Caco-2 (cell line): ENCODE measurements at regions of chr7 and their contacts with region 1.

Region 1: DNA sequence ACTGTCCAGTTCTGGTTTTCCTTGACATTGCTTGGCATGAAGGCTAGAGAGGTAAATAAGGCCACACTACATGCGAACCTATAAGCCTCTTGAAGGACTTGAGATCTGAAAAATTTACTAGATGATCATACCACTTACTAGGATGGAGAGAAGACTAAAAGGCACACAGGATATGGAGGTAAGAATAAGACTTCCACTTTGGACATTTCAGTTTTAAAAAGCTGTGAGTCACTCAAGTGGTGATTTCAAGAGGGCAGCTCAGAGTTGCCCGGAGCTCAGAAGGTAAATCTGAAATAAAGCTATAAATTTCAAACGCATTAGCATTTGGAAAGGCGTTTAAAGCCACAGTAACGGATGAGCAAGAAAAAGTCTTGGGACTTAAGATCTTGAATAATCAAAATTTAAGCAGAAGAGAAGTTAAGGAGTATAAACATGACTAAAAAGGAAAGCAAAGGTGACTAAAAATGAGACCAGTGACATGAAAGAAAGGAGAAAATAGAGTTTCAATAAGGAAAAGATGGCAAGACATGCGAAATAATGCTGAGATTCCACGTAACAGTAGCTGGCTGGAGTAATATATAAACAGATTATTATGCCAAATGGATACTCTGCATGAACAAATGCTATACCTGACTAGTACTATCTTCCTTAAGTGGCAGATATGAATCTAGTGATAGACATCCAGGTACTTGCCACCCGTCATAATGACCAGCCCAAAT is 68.3 kb downstream of the SNX13 start:
- DNase-seq: no peak
- H3K4me3 ChIP-seq: no peak overlapping the region
- H3K4me3 Mint-ChIP-seq: no peak overlapping the region
- H3K27ac Mint-ChIP-seq: no peak overlapping the region
- H3K4me1 ChIP-seq: no peaks in the 10 kb centered on the region
- H3K4me1 Mint-ChIP-seq: no peaks in the 10 kb centered on the region
- H3K27me3 ChIP-seq: no peaks in the 10 kb centered on the region
- H3K27me3 Mint-ChIP-seq: no peaks in the 10 kb centered on the region
- CTCF ChIP-seq: no peak

Region 2: DNA sequence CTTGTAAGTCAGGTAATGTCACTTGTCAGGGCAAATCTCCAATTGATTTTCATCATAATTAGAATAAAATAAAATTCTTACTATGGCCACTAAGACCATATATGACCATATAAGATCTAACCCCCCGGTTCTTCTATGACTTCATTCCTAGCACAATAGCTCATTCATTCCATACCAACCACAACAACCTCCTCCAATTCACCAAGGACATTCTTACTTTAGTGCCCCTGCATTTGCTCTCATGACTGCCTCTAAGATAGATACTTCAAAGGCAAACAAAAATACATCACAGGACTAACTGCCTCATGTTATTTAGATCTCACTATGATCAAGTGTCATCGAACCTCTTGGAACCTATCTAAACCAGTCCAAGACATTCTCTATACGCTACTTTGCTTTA is 22.5 kb before region 1 on chr7:
- CTCF ChIA-PET with region 1: no interaction called
- POLR2A ChIA-PET with region 1: no interaction called
- intact Hi-C with region 1: no loop called
- DNase-seq: no peak
- H3K4me3 ChIP-seq: no peak overlapping the region
- H3K4me3 Mint-ChIP-seq: no peak overlapping the region
- H3K27ac Mint-ChIP-seq: no peak overlapping the region
- H3K4me1 ChIP-seq: no peaks in the 10 kb centered on the region
- H3K4me1 Mint-ChIP-seq: peaks cover 13% of the 10 kb centered on the region
- H3K27me3 ChIP-seq: no peaks in the 10 kb centered on the region
- H3K27me3 Mint-ChIP-seq: no peaks in the 10 kb centered on the region
- CTCF ChIP-seq: no peak

Region 3: DNA sequence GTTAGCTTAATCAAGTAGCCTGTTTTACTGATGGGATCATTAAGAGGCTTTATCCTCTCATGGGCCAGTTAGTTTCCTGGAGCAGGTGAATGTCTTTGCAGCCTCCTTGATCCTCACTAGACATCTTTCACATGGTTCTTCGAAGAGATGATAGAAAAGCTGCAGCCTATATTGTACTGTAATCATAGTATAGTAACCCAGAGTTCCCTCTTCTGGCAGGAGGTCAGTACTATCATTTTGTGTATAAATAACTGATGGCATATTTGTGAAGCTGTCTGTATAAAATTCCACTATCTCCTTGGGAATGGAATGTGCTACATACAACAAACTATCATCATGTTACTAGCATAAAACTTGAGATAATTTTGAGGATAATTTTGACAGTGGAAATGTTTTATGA is 279.4 kb after region 1 on chr7:
- CTCF ChIA-PET with region 1: no interaction called
- POLR2A ChIA-PET with region 1: interaction called, 10 read pairs
- intact Hi-C with region 1: no loop called
- DNase-seq: peak in 1 of 2 experiments; percentile 5
- H3K4me3 ChIP-seq: no peak overlapping the region
- H3K4me3 Mint-ChIP-seq: no peak overlapping the region
- H3K27ac Mint-ChIP-seq: no peak overlapping the region
- H3K4me1 ChIP-seq: no peaks in the 10 kb centered on the region
- H3K4me1 Mint-ChIP-seq: no peaks in the 10 kb centered on the region
- H3K27me3 ChIP-seq: no peaks in the 10 kb centered on the region
- H3K27me3 Mint-ChIP-seq: no peaks in the 10 kb centered on the region
- CTCF ChIP-seq: no peak